ENCODE measurements at regions of chr10 and their contacts with region 1.

Region 1: GRCh38 chr10:102114861-102115618 is 5.1 kb downstream of the LDB1 start:
- DNase-seq: peak; percentile 69 to 86 (median 73)
- H3K4me3 ChIP-seq: peak overlapping the region; percentile 50 to 54
- H3K4me3 Mint-ChIP-seq: peak overlapping the region; percentile 85 to 97 (median 93)
- H3K27ac ChIP-seq: peak overlapping the region; percentile 90
- H3K27ac Mint-ChIP-seq: peak overlapping the region; percentile 89 to 97 (median 96)
- H3K4me1 ChIP-seq: peaks cover 67% of the 10 kb centered on the region
- H3K4me1 Mint-ChIP-seq: peaks cover 44 to 77% (median 61%) of the 10 kb centered on the region in 4 donors
- H3K27me3 ChIP-seq: no peaks in the 10 kb centered on the region
- H3K27me3 Mint-ChIP-seq: no peaks in the 10 kb centered on the region

Region 2: DNA sequence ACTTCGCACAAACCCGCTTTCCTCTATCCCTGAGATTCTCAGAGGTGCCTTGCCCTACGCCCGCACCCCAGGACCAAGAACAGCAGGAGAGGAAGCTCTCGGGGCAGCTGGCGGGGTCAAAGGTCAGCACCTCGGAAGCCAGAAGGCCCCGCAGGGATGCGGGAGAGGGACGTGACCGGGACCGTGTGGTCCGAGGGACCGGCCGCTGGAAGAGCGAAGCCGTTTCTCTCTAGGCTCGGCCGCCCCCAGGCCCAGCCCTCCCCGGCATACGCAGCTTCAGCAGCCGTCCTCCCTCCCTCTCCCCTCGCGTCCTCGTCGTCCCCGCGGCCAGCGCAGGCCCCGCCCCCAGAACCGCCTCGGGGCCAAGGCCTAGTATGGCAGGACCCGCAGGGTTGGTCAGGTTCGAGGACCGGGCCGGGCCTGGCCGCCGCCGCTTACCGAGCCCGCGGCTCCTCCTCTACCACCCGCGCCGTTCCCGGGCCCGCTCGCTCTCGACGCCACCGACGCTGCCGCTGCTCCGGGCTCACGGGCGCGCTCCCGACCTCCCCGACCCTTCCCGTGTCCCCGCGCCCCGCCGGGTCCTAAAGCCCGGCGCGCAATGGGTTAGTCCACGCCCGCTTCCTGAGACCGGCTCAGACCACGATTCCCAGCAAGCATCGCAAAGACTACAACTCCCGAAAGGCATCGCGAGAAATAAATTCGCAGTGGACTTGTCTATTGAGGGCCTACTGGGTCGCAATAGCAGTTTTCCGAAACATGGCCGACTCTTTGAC is 59.2 kb before region 1 on chr10 and contains the start of gene ARMH3:
- CTCF ChIA-PET with region 1: no interaction called
- POLR2A ChIA-PET with region 1: interaction called, 10 read pairs
- intact Hi-C with region 1: loop called (anchors 2 kb)
- DNase-seq: peak; percentile 89 to 92 (median 90)
- H3K4me3 ChIP-seq: peak within 1 kb of the TSS; percentile 89 to 99
- H3K4me3 Mint-ChIP-seq: peak within 1 kb of the TSS; percentile 95 to 98 (median 96)
- H3K27ac ChIP-seq: peak within 1 kb of the TSS; percentile 88
- H3K27ac Mint-ChIP-seq: peak within 1 kb of the TSS; percentile 94 to 99 (median 97)
- H3K4me1 ChIP-seq: peaks cover 51% of the 10 kb centered on the region
- H3K4me1 Mint-ChIP-seq: peaks cover 31 to 54% (median 42%) of the 10 kb centered on the region in 4 donors
- H3K27me3 ChIP-seq: no peaks in the 10 kb centered on the region
- H3K27me3 Mint-ChIP-seq: no peaks in the 10 kb centered on the region
- total RNA-seq, gene ARMH3: 31.4 to 31.8 TPM

Region 3: GRCh38 chr10:102064868-102065560 is 50.0 kb before region 1 on chr10 and contains the start of gene HPS6:
- CTCF ChIA-PET with region 1: no interaction called
- POLR2A ChIA-PET with region 1: interaction called, 6 read pairs
- intact Hi-C with region 1: loop called (anchors 1 kb)
- DNase-seq: peak; percentile 86 to 90 (median 88)
- H3K4me3 ChIP-seq: peak within 1 kb of the TSS; percentile 49 to 57
- H3K4me3 Mint-ChIP-seq: peak within 1 kb of the TSS; percentile 87 to 92 (median 88)
- H3K27ac ChIP-seq: peak within 1 kb of the TSS; percentile 90
- H3K27ac Mint-ChIP-seq: peak within 1 kb of the TSS; percentile 92 to 99 (median 96)
- H3K4me1 ChIP-seq: peaks cover 42% of the 10 kb centered on the region
- H3K4me1 Mint-ChIP-seq: peaks cover 19 to 39% (median 29%) of the 10 kb centered on the region in 4 donors
- H3K27me3 ChIP-seq: no peaks in the 10 kb centered on the region
- H3K27me3 Mint-ChIP-seq: no peaks in the 10 kb centered on the region
- total RNA-seq, gene HPS6: 25.1 to 27.9 TPM

Region 4: GRCh38 chr10:102101152-102101551 is 13.9 kb before region 1 on chr10:
- CTCF ChIA-PET with region 1: interaction called, 24 read pairs
- POLR2A ChIA-PET with region 1: interaction called, 7 read pairs
- intact Hi-C with region 1: no loop called
- DNase-seq: no peak
- H3K4me3 ChIP-seq: no peak overlapping the region
- H3K4me3 Mint-ChIP-seq: no peak overlapping the region
- H3K27ac ChIP-seq: no peak overlapping the region
- H3K27ac Mint-ChIP-seq: no peak overlapping the region
- H3K4me1 ChIP-seq: peaks cover 16% of the 10 kb centered on the region
- H3K4me1 Mint-ChIP-seq: peaks cover 10 to 18% (median 12%) of the 10 kb centered on the region in 4 donors
- H3K27me3 ChIP-seq: no peaks in the 10 kb centered on the region
- H3K27me3 Mint-ChIP-seq: no peaks in the 10 kb centered on the region